ENCODE measurements at regions of chr9 and their contacts with region 1.

Region 1: GRCh38 chr9:101235105-101235866 is 149.5 kb downstream of the BAAT start:
- DNase-seq: no peak
- ATAC-seq: no peak

Region 2: GRCh38 chr9:100700689-100701318 is 534.5 kb before region 1 on chr9:
- intact Hi-C with region 1: loop called (anchors 10 kb)
- DNase-seq: no peak
- ATAC-seq: no peak

Region 3: DNA sequence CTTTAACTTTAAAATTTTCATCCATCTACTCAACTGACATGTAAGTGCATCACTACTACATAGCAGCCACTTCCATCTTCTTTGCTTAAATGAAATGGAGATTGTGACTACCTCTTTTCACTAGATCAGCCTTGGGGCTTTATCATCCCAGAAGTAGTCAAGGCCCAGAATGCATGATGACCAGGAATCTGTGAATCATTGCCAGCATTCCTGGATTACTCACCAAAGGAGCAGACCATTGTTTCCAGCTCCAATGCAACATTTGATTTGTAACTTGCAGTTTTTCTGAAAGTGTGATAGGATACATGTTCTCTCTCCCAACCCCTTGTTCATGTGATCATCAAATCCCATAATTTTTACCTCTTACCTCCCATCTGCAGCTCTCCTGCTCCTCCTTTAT is 141.7 kb before region 1 on chr9:
- intact Hi-C with region 1: no loop called
- DNase-seq: no peak
- ATAC-seq: no peak

Region 4: DNA sequence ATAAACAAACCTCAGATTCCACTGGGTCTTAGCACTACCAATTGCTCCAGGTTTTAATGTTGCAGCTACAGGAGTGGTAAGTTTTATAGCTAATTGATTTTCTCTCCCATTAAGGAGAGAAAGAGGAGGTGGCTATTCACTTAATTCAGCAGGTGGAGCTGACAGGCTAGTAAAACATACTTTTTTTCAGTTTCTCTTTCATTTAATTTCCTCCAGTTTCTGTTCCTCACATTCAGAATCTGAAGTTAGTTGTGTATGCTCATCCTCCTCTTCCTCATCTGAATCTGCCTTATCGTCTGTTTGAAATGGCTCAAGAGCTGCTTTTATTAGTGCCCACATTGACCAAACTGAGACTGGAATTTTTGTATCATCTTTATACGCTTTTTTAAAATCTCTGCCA is 108.7 kb before region 1 on chr9:
- intact Hi-C with region 1: loop called (anchors 10 kb)
- DNase-seq: no peak
- ATAC-seq: no peak

Region 5: GRCh38 chr9:101274971-101275768 is 39.9 kb after region 1 on chr9:
- intact Hi-C with region 1: no loop called
- DNase-seq: no peak
- ATAC-seq: no peak